CD4-positive, alpha-beta memory T cell (primary cell): ENCODE measurements at regions of chr13 and their contacts with region 1.

Region 1: DNA sequence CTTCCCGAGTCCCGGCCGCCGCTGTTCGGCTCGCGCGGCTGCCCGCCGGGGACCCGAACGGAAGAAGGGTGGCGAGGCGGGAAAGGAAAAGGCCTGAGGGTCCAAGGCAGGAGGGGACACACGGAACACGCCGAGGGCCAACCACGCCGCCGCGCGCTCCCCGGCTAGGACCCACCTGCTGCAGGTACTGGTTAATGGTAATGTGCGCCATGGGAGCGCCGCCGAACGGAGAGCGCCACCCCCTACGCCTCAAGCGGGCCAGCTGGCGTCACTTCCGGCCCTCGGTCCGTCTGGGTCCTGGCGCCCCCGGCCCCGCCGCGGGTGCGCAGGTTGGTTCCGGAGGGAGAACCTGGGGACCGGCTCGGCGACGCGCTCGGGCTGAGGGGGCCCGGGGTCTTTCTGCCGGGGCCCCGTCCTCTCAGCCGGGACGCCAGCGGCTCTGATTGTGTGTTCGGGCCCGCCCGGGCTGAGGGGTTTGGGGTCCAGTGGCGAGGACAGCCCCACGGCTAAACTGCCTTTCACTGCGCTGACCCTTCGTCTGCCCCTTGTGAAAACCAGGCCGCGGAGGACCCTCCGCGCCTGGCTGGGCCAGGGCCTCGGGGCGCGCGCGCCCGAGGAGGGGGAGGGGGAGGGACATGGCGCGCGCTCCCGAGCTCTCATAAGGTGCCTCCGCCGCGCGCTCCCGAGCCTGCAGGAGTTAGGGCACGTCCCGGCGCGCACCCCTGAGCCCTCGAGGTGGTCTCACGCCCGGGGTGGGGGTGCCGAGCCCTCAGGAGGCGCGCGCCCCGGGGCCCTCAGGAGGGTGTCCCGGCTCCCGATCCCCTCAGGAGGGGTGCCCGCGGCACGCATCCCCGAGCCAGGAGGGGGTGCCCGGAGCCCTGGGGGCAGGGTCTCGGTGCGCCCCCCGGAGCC is at the start of gene PCID2:
- DNase-seq: peak; percentile 89 to 95 (median 91)
- H3K4me3 ChIP-seq: peak within 1 kb of the TSS; percentile 73 to 80
- H3K4me3 Mint-ChIP-seq: peak within 1 kb of the TSS; percentile 86 to 92 (median 90)
- H3K27ac ChIP-seq: peak within 1 kb of the TSS; percentile 89
- H3K27ac Mint-ChIP-seq: peak within 1 kb of the TSS; percentile 89 to 96 (median 95)
- H3K4me1 ChIP-seq: peaks cover 78% of the 10 kb centered on the region
- H3K4me1 Mint-ChIP-seq: peaks cover 43 to 64% (median 53%) of the 10 kb centered on the region in 4 donors
- H3K27me3 ChIP-seq: no peaks in the 10 kb centered on the region
- H3K27me3 Mint-ChIP-seq: no peaks in the 10 kb centered on the region
- total RNA-seq, gene PCID2: 78.2 to 79.8 TPM

Region 2: GRCh38 chr13:112968908-112969691 is 239.6 kb before region 1 on chr13 and contains the start of gene MCF2L:
- CTCF ChIA-PET with region 1: no interaction called
- POLR2A ChIA-PET with region 1: interaction called, 22 read pairs
- intact Hi-C with region 1: loop called (anchors 1 kb)
- DNase-seq: peak; percentile 68 to 79 (median 76)
- H3K4me3 ChIP-seq: peak within 1 kb of the TSS; percentile 62 to 64
- H3K4me3 Mint-ChIP-seq: peak within 1 kb of the TSS; percentile 91 to 98 (median 96)
- H3K27ac ChIP-seq: peak within 1 kb of the TSS; percentile 57
- H3K27ac Mint-ChIP-seq: peak within 1 kb of the TSS; percentile 89 to 97 (median 94)
- H3K4me1 ChIP-seq: peaks cover 18% of the 10 kb centered on the region
- H3K4me1 Mint-ChIP-seq: peaks cover 19 to 38% (median 29%) of the 10 kb centered on the region in 4 donors
- H3K27me3 ChIP-seq: no peaks in the 10 kb centered on the region
- H3K27me3 Mint-ChIP-seq: no peaks in the 10 kb centered on the region
- total RNA-seq, gene MCF2L: 17.5 to 18.9 TPM

Region 3: DNA sequence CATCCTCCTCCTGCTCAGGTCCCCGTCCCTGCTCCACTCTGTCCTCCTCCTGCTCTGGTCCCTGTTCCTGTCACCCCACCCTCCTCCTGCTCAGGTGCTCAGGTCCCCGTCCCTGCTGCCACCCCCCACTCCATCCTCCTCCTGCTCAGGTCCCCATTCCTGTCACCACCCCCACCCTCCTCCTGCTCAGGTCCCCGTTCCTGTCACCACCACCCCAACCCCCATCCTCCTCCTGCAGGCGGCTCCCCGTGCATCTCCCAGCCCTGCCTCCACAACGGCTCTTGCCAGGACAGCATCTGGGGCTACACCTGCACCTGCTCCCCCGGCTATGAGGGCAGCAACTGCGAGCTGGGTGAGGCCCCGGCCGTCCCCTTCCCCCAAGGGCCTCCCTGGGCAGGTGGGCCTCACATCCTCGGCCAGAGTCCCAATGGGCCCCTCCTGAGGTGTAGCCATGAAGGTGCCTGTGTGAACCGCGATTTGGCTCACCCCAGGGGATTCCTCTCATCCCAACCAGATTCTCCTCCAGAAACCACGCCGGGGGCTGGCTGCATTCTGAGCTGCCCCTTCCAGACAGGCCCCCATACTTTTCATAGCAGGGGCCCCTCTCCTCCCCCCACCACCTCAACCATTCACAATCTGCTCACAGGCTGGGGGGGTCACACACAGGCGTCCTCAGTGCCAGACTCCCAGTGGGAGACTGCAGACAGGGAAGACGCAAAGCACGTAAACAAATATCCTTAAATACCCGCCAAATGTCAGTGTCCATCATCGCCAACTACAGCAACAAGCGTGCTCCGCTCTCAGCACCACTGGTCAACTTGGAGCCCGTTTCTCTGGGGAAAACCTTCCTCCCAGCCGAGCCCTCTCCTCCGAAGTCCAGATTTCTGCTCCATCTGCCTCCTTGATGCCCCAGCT is 45.7 kb before region 1 on chr13:
- CTCF ChIA-PET with region 1: no interaction called
- POLR2A ChIA-PET with region 1: interaction called, 14 read pairs
- intact Hi-C with region 1: no loop called
- DNase-seq: peak in 2 of 5 donors; percentile 44 to 66
- H3K4me3 ChIP-seq: no peak overlapping the region
- H3K4me3 Mint-ChIP-seq: peak overlapping the region in 5 of 8 donors; percentile 45 to 68 (median 62)
- H3K27ac ChIP-seq: peak overlapping the region; percentile 25
- H3K27ac Mint-ChIP-seq: peak overlapping the region in 6 of 7 donors; percentile 15 to 90 (median 67)
- H3K4me1 ChIP-seq: peaks cover 24% of the 10 kb centered on the region
- H3K4me1 Mint-ChIP-seq: peaks cover 13 to 44% (median 31%) of the 10 kb centered on the region in 4 donors
- H3K27me3 ChIP-seq: no peaks in the 10 kb centered on the region
- H3K27me3 Mint-ChIP-seq: no peaks in the 10 kb centered on the region

Region 4: GRCh38 chr13:113178070-113178895 is 30.4 kb before region 1 on chr13:
- CTCF ChIA-PET with region 1: no interaction called
- POLR2A ChIA-PET with region 1: interaction called, 66 read pairs
- intact Hi-C with region 1: loop called (anchors 5 kb)
- DNase-seq: no peak
- H3K4me3 ChIP-seq: no peak overlapping the region
- H3K4me3 Mint-ChIP-seq: peak overlapping the region in 4 of 8 donors; percentile 5 to 65 (median 28)
- H3K27ac ChIP-seq: peak overlapping the region; percentile 28
- H3K27ac Mint-ChIP-seq: peak overlapping the region; percentile 8 to 81 (median 72)
- H3K4me1 ChIP-seq: peaks cover 67% of the 10 kb centered on the region
- H3K4me1 Mint-ChIP-seq: peaks cover 22 to 74% (median 44%) of the 10 kb centered on the region in 4 donors
- H3K27me3 ChIP-seq: no peaks in the 10 kb centered on the region
- H3K27me3 Mint-ChIP-seq: no peaks in the 10 kb centered on the region

Region 5: GRCh38 chr13:113296842-113297369 is 88.2 kb after region 1 on chr13 and contains the start of gene LAMP1:
- CTCF ChIA-PET with region 1: no interaction called
- POLR2A ChIA-PET with region 1: interaction called, 24 read pairs
- intact Hi-C with region 1: loop called (anchors 1 kb)
- DNase-seq: peak; percentile 95 to 100 (median 99)
- H3K4me3 ChIP-seq: peak within 1 kb of the TSS; percentile 73 to 80
- H3K4me3 Mint-ChIP-seq: peak within 1 kb of the TSS; percentile 95 to 99 (median 97)
- H3K27ac ChIP-seq: peak within 1 kb of the TSS; percentile 90
- H3K27ac Mint-ChIP-seq: peak within 1 kb of the TSS; percentile 96 to 100 (median 99)
- H3K4me1 ChIP-seq: peaks cover 41% of the 10 kb centered on the region
- H3K4me1 Mint-ChIP-seq: peaks cover 29 to 47% (median 38%) of the 10 kb centered on the region in 4 donors
- H3K27me3 ChIP-seq: no peaks in the 10 kb centered on the region
- H3K27me3 Mint-ChIP-seq: peaks cover 14% of the 10 kb centered on the region in 2 donors
- total RNA-seq, gene LAMP1: 119 to 126 TPM

Region 6: GRCh38 chr13:113410472-113411201 is 202.0 kb after region 1 on chr13:
- CTCF ChIA-PET with region 1: no interaction called
- POLR2A ChIA-PET with region 1: no interaction called
- intact Hi-C with region 1: no loop called
- DNase-seq: no peak
- H3K4me3 ChIP-seq: no peak overlapping the region
- H3K4me3 Mint-ChIP-seq: no peak overlapping the region
- H3K27ac ChIP-seq: no peak overlapping the region
- H3K27ac Mint-ChIP-seq: peak overlapping the region in 3 of 7 donors; percentile 18 to 62 (median 41)
- H3K4me1 ChIP-seq: no peaks in the 10 kb centered on the region
- H3K4me1 Mint-ChIP-seq: no peaks in the 10 kb centered on the region
- H3K27me3 ChIP-seq: no peaks in the 10 kb centered on the region
- H3K27me3 Mint-ChIP-seq: peaks cover 0 to 3% of the 10 kb centered on the region in 2 donors

Region 7: GRCh38 chr13:114110091-114110829 is 901.6 kb after region 1 on chr13:
- CTCF ChIA-PET with region 1: no interaction called
- POLR2A ChIA-PET with region 1: no interaction called
- intact Hi-C with region 1: no loop called
- DNase-seq: peak; percentile 82 to 91 (median 88)
- H3K4me3 ChIP-seq: peak overlapping the region; percentile 42 to 44
- H3K4me3 Mint-ChIP-seq: peak overlapping the region; percentile 84 to 91 (median 88)
- H3K27ac ChIP-seq: peak overlapping the region; percentile 52
- H3K27ac Mint-ChIP-seq: peak overlapping the region; percentile 94 to 98 (median 95)
- H3K4me1 ChIP-seq: peaks cover 96% of the 10 kb centered on the region
- H3K4me1 Mint-ChIP-seq: peaks cover 47 to 90% (median 74%) of the 10 kb centered on the region in 4 donors
- H3K27me3 ChIP-seq: no peaks in the 10 kb centered on the region
- H3K27me3 Mint-ChIP-seq: no peaks in the 10 kb centered on the region